Activated T-helper 2 cell treated with anti-CD3 and anti-CD28 coated beads, Interferon-gamma antibody, Interleukin-2, Interleukin-4, amounts not matched to agents 10 μg/mL and 5 μg/mL and 100 μg/mL, durations not matched to agents 14 hours and 24 hours and 36 hours (primary cell): ENCODE measurements at regions of chr11 and their contacts with region 1.

Region 1: GRCh38 chr11:102287964-102288724 is 29.1 kb upstream of the BIRC3 start:
- DNase-seq: no peak
- H3K4me3 Mint-ChIP-seq: peak overlapping the region; percentile 19
- H3K27ac Mint-ChIP-seq: peak overlapping the region; percentile 19
- H3K4me1 Mint-ChIP-seq: peaks cover 35% of the 10 kb centered on the region
- H3K27me3 Mint-ChIP-seq: no peaks in the 10 kb centered on the region

Region 2: DNA sequence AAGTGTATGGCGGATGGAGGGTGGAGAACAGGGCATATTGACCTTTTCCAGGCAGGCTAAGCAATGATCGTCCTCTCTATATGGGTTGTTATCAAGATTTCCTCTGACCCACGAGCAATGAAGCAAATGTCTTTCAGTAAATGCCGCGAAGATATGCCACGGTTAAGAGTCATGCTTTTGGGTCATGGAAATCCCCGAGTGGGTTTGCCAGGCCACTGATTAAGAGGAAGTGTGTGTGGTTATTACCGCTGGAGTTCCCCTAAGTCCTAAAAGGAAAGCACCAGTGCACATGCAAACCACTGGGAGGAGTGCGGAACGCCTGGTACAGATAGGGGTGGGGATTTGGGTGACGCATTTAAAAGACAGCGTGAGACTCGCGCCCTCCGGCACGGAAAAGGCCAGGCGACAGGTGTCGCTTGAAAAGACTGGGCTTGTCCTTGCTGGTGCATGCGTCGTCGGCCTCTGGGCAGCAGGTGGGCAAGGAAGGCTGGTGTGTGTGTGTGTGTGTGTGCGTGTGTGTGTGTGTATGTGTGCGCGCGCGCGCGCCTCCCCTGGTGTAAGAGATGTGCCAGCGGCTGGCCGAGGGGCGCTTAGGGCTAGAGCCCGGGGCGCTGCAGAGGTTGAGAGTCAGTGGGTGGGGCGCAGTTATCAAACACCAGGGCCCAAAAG is 29.1 kb after region 1 on chr11 and contains the start of gene BIRC3:
- intact Hi-C with region 1: loop called (anchors 1 kb)
- DNase-seq: peak; percentile 91
- H3K4me3 Mint-ChIP-seq: peak within 1 kb of the TSS; percentile 98
- H3K27ac Mint-ChIP-seq: peak within 1 kb of the TSS; percentile 99
- H3K4me1 Mint-ChIP-seq: peaks cover 58% of the 10 kb centered on the region
- H3K27me3 Mint-ChIP-seq: no peaks in the 10 kb centered on the region
- total RNA-seq, gene BIRC3: 217 and 221 TPM in 2 replicates

Region 3: GRCh38 chr11:102341844-102342318 is 53.7 kb after region 1 on chr11:
- intact Hi-C with region 1: loop called (anchors 1 kb)
- DNase-seq: peak; percentile 56
- H3K4me3 Mint-ChIP-seq: no peak overlapping the region
- H3K27ac Mint-ChIP-seq: no peak overlapping the region
- H3K4me1 Mint-ChIP-seq: peaks cover 27% of the 10 kb centered on the region
- H3K27me3 Mint-ChIP-seq: no peaks in the 10 kb centered on the region

Region 4: GRCh38 chr11:102346748-102347461 is 58.8 kb after region 1 on chr11 and contains the start of gene BIRC2:
- intact Hi-C with region 1: loop called (anchors 1 kb)
- DNase-seq: peak; percentile 92
- H3K4me3 Mint-ChIP-seq: peak within 1 kb of the TSS; percentile 98
- H3K27ac Mint-ChIP-seq: peak within 1 kb of the TSS; percentile 98
- H3K4me1 Mint-ChIP-seq: peaks cover 29% of the 10 kb centered on the region
- H3K27me3 Mint-ChIP-seq: no peaks in the 10 kb centered on the region
- total RNA-seq, gene BIRC2: 28.0 and 30.4 TPM in 2 replicates

Region 5: DNA sequence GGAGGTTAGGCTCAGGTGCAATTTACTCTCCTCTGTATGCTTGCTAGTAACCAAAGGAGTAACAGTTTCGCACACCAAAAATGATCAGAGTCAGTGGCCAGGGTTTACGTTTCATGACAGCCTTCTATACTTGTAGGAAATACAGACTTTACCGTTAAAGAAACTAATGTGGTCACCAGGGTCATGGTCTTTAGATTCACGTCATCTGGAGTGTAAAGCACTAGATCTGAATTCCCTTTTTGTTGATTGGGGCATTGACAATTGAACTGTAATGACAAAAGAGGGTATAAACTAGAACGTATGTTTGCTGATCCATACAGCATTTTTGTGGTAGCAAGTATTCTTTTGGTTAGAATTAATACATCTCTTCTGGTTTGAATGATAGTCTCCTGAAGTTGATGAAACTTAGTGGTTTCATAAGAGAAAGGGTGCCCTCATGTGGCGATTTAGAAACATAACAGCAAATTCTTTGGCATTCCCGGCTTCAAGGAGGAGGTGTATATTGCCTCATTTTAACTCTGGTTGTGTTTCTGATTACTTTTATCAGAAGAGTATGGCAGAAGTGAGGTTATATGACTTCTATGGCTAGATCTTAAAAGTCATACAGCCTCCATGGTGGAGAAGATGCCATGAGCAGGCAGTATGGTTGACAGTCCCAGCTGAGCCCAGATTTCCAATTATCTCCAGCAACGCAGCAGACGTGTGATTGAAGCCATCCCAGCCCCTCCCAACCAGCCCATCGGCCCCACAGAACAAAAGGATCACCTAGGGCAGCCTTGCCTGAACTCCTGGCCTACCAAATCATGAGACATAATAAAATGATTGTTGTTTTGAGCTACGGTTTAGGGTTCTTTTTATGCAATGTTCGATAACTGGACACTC is 207.3 kb after region 1 on chr11:
- intact Hi-C with region 1: loop called (anchors 2 kb)
- DNase-seq: no peak
- H3K4me3 Mint-ChIP-seq: no peak overlapping the region
- H3K27ac Mint-ChIP-seq: no peak overlapping the region
- H3K4me1 Mint-ChIP-seq: peaks cover 16% of the 10 kb centered on the region
- H3K27me3 Mint-ChIP-seq: peaks cover 19% of the 10 kb centered on the region

Region 6: GRCh38 chr11:102614485-102614884 is 326.3 kb after region 1 on chr11:
- intact Hi-C with region 1: loop called (anchors 2 kb)
- DNase-seq: no peak
- H3K4me3 Mint-ChIP-seq: no peak overlapping the region
- H3K27ac Mint-ChIP-seq: no peak overlapping the region
- H3K4me1 Mint-ChIP-seq: peaks cover 18% of the 10 kb centered on the region
- H3K27me3 Mint-ChIP-seq: no peaks in the 10 kb centered on the region

Region 7: DNA sequence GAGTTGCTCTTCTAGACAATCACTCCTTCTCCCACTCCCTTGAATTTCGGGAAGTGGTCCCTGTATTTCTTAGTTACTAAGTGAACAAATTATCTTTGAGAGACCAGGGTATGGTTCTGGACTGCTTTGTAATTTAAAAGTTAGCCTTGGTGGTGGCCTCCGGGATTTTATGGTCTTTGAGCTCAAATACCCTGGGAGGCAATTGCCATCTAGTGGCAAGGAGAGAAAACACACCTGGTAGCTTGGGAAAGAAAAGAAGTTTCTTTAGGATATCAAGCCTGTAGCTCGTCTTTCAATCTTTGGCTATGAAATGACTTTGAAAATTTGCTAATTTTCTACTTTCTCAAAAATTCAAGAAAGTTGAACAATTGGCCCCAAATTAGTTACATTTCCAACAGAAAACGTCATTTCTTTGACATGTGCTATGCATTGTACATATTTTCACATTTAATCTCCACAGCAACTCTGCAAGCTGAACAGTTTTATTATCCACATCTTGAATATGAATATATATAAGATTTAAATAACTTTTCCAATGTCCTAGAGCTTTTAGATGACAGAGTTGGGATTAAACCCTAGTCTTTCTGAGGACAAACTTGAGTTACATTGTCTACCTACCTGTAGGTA is 378.3 kb after region 1 on chr11:
- intact Hi-C with region 1: loop called (anchors 10 kb)
- DNase-seq: no peak
- H3K4me3 Mint-ChIP-seq: no peak overlapping the region
- H3K27ac Mint-ChIP-seq: no peak overlapping the region
- H3K4me1 Mint-ChIP-seq: no peaks in the 10 kb centered on the region
- H3K27me3 Mint-ChIP-seq: peaks cover 8% of the 10 kb centered on the region